ENCODE measurements at regions of chr17 and their contacts with region 1.

Region 1: GRCh38 chr17:28951991-28952975 is 965 bp upstream of the PHF12 start:
- DNase-seq: peak; percentile 94
- ATAC-seq: peak; percentile 74
- H3K4me3 Mint-ChIP-seq: no peak overlapping the region
- H3K27ac Mint-ChIP-seq: no peak overlapping the region
- H3K4me1 Mint-ChIP-seq: peaks cover 28% of the 10 kb centered on the region
- H3K27me3 Mint-ChIP-seq: no peaks in the 10 kb centered on the region
- CTCF ChIP-seq: no peak

Region 2: GRCh38 chr17:28717578-28718333 is 234.5 kb before region 1 on chr17 and contains the start of gene RAB34:
- CTCF ChIA-PET with region 1: interaction called, 17 read pairs
- POLR2A ChIA-PET with region 1: interaction called, 17 read pairs
- DNase-seq: peak; percentile 96
- ATAC-seq: peak; percentile 71
- H3K4me3 Mint-ChIP-seq: peak within 1 kb of the TSS; percentile 100
- H3K27ac Mint-ChIP-seq: peak within 1 kb of the TSS; percentile 97
- H3K4me1 Mint-ChIP-seq: peaks cover 47% of the 10 kb centered on the region
- H3K27me3 Mint-ChIP-seq: no peaks in the 10 kb centered on the region
- CTCF ChIP-seq: no peak
- total RNA-seq, gene RAB34: 153 to 181 TPM (median 162 TPM) in 3 replicates

Region 3: GRCh38 chr17:28875848-28876550 is 76.3 kb before region 1 on chr17:
- CTCF ChIA-PET with region 1: no interaction called
- POLR2A ChIA-PET with region 1: no interaction called
- DNase-seq: no peak
- ATAC-seq: no peak
- H3K4me3 Mint-ChIP-seq: no peak overlapping the region
- H3K27ac Mint-ChIP-seq: no peak overlapping the region
- H3K4me1 Mint-ChIP-seq: peaks cover 6% of the 10 kb centered on the region; the same call in 1 of the 2 replicates
- H3K27me3 Mint-ChIP-seq: peaks cover 15% of the 10 kb centered on the region
- CTCF ChIP-seq: no peak

Region 4: DNA sequence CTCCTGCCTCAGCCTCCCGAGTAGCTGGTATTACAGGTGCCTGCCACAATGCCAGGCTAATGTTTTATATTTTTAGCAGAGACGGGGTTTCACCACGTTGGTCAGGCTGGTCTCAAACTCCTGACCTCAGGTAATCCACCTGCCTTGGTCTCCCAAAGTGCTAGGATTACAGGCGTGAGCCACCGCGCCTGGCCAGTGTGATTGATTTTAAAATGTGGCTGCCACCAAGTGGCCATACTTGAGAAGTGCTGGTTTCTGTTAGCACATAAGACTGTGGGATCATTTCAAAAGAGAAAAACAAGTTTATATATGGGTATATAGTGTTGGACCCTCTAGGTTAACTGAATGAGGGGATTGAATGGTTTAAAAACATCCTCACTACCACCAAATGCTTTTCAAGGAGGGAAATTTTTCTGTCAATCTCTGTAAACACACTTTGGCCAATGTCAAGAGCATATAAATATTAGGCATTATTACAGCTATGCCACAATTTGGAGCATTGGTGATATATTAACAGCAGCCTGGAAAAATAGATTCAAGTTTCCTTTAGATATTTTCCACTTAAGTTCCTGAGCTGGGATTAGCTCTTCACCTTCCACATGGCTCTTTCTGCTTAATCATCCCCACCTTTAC is 35.9 kb before region 1 on chr17:
- CTCF ChIA-PET with region 1: interaction called, 12 read pairs
- POLR2A ChIA-PET with region 1: no interaction called
- DNase-seq: peak; percentile 53
- ATAC-seq: peak; percentile 88
- H3K4me3 Mint-ChIP-seq: no peak overlapping the region
- H3K27ac Mint-ChIP-seq: no peak overlapping the region
- H3K4me1 Mint-ChIP-seq: no peaks in the 10 kb centered on the region
- H3K27me3 Mint-ChIP-seq: no peaks in the 10 kb centered on the region
- CTCF ChIP-seq: peak; percentile 62

Region 5: DNA sequence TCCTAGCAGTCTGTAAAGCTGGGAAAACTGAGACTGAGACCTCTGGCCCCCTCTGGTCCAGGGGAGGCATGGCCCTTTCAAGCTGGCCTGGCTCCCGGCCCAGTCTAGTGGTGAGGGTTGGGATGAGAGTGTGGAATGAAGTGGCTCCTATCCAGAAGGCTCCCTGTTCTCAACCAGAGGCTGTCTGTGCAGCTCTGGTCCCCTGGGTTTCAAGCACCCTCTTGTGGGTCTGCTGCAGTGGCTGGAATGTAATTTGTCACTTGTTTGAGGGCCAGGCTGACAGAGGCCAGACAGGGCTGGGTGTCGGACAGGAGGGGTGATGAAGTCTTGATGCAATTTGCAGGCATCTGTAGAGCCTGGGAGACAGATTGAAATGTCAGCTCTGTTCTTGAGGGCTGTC is 21.1 kb after region 1 on chr17:
- CTCF ChIA-PET with region 1: interaction called, 18 read pairs
- POLR2A ChIA-PET with region 1: interaction called, 3 read pairs
- DNase-seq: no peak
- ATAC-seq: no peak
- H3K4me3 Mint-ChIP-seq: no peak overlapping the region
- H3K27ac Mint-ChIP-seq: no peak overlapping the region
- H3K4me1 Mint-ChIP-seq: peaks cover 33% of the 10 kb centered on the region
- H3K27me3 Mint-ChIP-seq: peaks cover 3% of the 10 kb centered on the region; the same call in 1 of the 2 replicates
- CTCF ChIP-seq: no peak

Region 6: GRCh38 chr17:29005936-29006511 is 53.7 kb after region 1 on chr17 and contains the start of gene SEZ6:
- CTCF ChIA-PET with region 1: interaction called, 17 read pairs
- POLR2A ChIA-PET with region 1: interaction called, 4 read pairs
- DNase-seq: peak; percentile 91
- ATAC-seq: peak; percentile 63
- H3K4me3 Mint-ChIP-seq: peak within 1 kb of the TSS; percentile 69
- H3K27ac Mint-ChIP-seq: no peak within 1 kb of the TSS
- H3K4me1 Mint-ChIP-seq: peaks cover 76% of the 10 kb centered on the region
- H3K27me3 Mint-ChIP-seq: peaks cover 50% of the 10 kb centered on the region
- CTCF ChIP-seq: no peak
- total RNA-seq, gene SEZ6: 1.4 to 3.0 TPM (median 1.6 TPM) in 3 replicates

Region 7: DNA sequence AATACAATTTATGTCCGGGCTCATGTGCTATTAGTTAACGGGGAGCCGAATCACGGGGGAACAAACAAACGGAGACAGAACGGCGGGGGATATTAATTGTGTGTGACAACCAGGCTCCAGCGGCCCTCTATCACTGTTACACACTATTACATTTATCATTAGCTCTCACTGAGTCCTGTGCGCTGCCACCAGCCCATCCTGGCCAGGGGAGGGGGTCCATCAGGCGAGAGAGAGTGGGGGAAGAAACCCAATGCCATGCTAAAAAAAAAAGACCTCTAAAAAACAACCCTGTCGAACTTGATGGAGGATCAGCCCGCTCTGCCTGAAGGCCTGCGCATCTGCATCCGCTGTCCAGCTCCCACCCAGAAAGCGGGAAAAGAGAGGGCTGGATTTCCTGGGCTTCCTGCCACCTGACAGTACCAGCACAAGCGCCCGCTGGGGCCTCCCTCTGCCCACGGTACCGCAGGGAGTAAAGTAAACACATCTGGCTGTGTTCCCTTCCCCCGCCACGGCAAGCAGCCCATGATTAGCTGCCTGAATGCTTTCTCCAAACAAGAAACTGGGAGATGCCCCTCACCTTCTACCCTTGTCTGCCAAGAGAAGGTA is 132.4 kb after region 1 on chr17:
- CTCF ChIA-PET with region 1: interaction called, 14 read pairs
- POLR2A ChIA-PET with region 1: interaction called, 3 read pairs
- DNase-seq: no peak
- ATAC-seq: peak; percentile 19
- H3K4me3 Mint-ChIP-seq: no peak overlapping the region
- H3K27ac Mint-ChIP-seq: peak overlapping the region; percentile 5; the same call in 1 of the 2 replicates
- H3K4me1 Mint-ChIP-seq: peaks cover 43% of the 10 kb centered on the region
- H3K27me3 Mint-ChIP-seq: no peaks in the 10 kb centered on the region
- CTCF ChIP-seq: no peak

Region 8: GRCh38 chr17:29124117-29124924 is 172.0 kb after region 1 on chr17:
- CTCF ChIA-PET with region 1: interaction called, 762 read pairs
- POLR2A ChIA-PET with region 1: interaction called, 3 read pairs
- DNase-seq: peak; percentile 51
- ATAC-seq: peak; percentile 87
- H3K4me3 Mint-ChIP-seq: no peak overlapping the region
- H3K27ac Mint-ChIP-seq: no peak overlapping the region
- H3K4me1 Mint-ChIP-seq: peaks cover 3% of the 10 kb centered on the region; the same call in 1 of the 2 replicates
- H3K27me3 Mint-ChIP-seq: no peaks in the 10 kb centered on the region
- CTCF ChIP-seq: no peak